Esophagus muscularis mucosa (tissue), 4 donors: ENCODE measurements at regions of chr15 and their contacts with region 1.

Region 1: DNA sequence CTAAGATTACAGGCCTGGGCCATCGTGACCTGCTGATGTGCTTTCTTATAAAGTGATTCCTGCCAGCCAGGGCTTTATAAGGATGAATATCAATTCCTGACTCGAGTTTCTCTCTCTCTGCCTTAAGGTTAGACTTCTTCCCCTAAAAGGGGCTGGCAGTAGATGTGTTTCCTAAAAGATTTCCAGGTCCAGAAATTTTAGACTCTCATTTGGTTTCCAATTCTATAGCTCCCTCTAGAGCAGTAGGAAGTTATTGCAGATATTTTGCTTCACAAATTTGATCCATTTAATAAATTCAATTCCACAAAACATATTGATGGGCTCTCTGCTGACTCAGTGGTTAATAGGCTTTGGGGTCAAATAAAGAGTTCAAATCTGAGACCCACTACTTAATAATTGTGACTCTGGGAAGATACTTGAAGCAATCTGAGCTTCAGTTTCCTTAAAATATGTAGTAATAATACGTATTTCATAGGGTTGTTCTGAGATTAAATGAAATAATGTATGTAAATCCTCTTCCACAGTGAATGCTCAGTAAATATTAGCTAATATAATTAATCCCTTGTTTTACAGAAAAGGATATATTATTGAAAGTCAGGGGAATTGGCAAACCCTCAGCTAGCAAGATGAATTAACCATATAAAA is 2.1 kb downstream of the TRIM69 start:
- DNase-seq: no peak
- H3K4me3 ChIP-seq: no peak overlapping the region
- H3K27ac ChIP-seq: peak overlapping the region in 1 of 4 donors; percentile 19
- H3K4me1 ChIP-seq: peaks cover 0 to 16% (median 9%) of the 10 kb centered on the region in 4 donors
- H3K27me3 ChIP-seq: no peaks in the 10 kb centered on the region
- CTCF ChIP-seq: peak; percentile 75 to 82 (median 80)
- EP300 ChIP-seq: no peak
- POLR2A ChIP-seq: no peak

Region 2: DNA sequence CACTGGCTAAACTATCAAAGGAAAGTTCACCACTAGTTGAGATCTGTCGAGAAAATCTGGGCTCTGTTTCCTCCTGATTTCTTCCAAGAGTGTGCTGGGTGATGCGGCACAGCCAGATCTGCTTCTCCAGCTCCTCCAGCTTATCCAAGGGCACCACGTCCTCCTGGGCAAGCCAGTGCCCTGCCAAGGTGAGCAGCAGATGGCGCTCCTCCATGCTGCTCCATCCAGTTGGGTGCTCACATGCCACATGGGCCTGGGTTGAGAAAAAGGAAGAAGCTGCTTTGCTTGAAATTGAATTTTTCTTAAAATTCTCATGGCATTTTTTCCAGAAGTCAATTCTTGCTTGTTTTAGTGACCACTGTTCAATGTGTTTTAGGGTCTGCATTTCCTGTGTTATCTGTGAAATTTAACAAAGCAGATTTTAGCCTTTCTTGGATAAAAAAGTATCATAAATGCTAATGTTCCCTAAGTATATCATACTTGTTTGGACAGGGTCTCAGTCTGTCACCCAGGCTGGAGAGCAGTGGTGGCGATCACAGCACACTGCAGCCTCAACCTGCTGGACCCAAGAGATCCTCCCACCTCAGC is 154.2 kb before region 1 on chr15:
- intact Hi-C with region 1: loop called (anchors 10 kb)
- DNase-seq: no peak
- H3K4me3 ChIP-seq: no peak overlapping the region
- H3K27ac ChIP-seq: no peak overlapping the region
- H3K4me1 ChIP-seq: no peaks in the 10 kb centered on the region
- H3K27me3 ChIP-seq: no peaks in the 10 kb centered on the region
- CTCF ChIP-seq: peak in 1 of 3 experiments; percentile 27
- EP300 ChIP-seq: no peak
- POLR2A ChIP-seq: no peak

Region 3: GRCh38 chr15:44663409-44664308 is 74.8 kb before region 1 on chr15 and contains the start of gene SPG11:
- intact Hi-C with region 1: loop called (anchors 2 kb)
- DNase-seq: peak; percentile 99
- H3K4me3 ChIP-seq: peak within 1 kb of the TSS; percentile 78 to 99 (median 90)
- H3K27ac ChIP-seq: peak within 1 kb of the TSS; percentile 93 to 100 (median 96)
- H3K4me1 ChIP-seq: peaks cover 18 to 24% (median 21%) of the 10 kb centered on the region in 4 donors
- H3K27me3 ChIP-seq: no peaks in the 10 kb centered on the region
- CTCF ChIP-seq: peak; percentile 93 to 99 (median 97)
- EP300 ChIP-seq: no peak
- POLR2A ChIP-seq: peak; percentile 90
- total RNA-seq, gene SPG11: 40.4 to 80.6 (median 55.2) TPM

Region 4: DNA sequence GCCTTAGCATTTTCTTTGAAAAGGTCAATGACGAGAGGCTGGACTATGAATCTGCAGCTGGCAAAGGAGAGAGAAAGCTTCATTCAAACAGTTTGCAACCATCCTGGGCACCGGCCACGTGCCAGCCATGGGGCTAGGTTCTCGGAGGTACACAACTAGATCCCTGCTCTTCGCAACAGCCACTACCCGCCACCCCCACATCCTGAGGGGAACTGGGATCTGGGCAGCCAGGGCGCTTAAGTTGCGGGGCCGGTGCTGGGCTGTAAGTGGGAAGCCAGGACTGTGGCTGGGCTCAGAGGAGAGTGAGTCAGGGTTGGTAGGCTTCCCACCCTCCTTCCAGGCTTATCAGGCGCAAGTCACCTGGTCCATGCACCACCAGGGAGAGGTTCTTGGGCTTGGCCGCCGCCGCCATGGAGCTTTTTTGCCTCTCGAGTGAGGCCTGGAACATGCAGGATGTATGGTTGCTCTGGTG is 123.0 kb after region 1 on chr15:
- intact Hi-C with region 1: no loop called
- DNase-seq: no peak
- H3K4me3 ChIP-seq: no peak overlapping the region
- H3K27ac ChIP-seq: no peak overlapping the region
- H3K4me1 ChIP-seq: no peaks in the 10 kb centered on the region
- H3K27me3 ChIP-seq: peaks cover 0 to 4% (median 0%) of the 10 kb centered on the region in 4 donors
- CTCF ChIP-seq: no peak
- EP300 ChIP-seq: no peak
- POLR2A ChIP-seq: no peak

Region 5: DNA sequence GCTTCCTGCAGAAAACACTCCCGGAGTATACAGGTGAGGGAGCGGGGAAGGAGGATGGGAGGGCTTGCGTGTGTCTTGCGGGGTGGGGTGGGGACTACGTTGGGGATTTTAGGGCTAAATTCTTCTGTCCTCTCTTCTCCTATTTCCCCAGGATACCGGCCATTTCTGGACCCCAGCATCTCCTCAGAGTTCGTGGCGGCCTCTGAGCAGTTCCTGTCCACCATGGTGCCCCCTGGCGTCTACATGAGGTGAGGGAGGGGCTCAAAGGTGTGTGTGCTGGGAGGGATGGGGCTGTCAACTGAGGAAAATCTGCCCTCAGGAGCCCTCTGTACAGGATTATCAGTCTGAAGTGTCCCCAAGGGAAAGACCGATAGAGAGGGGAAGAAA is 397.9 kb after region 1 on chr15:
- intact Hi-C with region 1: no loop called
- DNase-seq: no peak
- H3K4me3 ChIP-seq: no peak overlapping the region
- H3K27ac ChIP-seq: no peak overlapping the region
- H3K4me1 ChIP-seq: peaks cover 6 to 11% (median 10%) of the 10 kb centered on the region in 4 donors
- H3K27me3 ChIP-seq: peaks cover 0 to 84% (median 22%) of the 10 kb centered on the region in 4 donors
- CTCF ChIP-seq: no peak
- EP300 ChIP-seq: no peak
- POLR2A ChIP-seq: no peak